ENCODE measurements at regions of chr16 and their contacts with region 1.

Region 1: DNA sequence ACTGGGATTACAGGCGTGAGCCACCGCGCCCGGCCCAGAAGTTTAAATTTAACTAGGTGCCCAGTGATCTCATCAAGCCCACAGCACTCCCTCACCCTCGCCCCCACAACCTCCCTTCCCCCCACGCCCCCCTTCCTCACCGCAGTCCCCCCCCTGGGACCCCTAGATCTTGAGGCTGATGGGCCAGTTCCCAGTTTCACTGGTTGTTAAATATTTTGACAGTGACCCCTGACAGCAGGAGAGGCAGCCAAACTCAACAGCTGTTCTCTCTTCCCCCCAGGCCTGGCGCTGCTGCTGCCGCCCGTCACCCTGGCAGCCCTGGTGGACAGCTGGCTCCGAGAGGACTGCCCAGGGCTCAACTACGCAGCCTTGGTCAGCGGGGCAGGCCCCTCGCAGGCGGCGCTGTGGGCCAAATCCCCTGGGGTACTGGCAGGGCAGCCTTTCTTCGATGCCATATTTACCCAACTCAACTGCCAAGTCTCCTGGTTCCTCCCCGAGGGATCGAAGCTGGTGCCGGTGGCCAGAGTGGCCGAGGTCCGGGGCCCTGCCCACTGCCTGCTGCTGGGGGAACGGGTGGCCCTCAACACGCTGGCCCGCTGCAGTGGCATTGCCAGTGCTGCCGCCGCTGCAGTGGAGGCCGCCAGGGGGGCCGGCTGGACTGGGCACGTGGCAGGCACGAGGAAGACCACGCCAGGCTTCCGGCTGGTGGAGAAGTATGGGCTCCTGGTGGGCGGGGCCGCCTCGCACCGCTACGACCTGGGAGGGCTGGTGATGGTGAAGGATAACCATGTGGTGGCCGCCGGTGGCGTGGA is 15.6 kb downstream of the QPRT start:
- DNase-seq: no peak
- ATAC-seq: peak; percentile 17
- H3K4me3 ChIP-seq: no peak overlapping the region
- H3K27ac ChIP-seq: no peak overlapping the region
- H3K4me1 ChIP-seq: no peaks in the 10 kb centered on the region
- H3K27me3 ChIP-seq: peaks cover 8% of the 10 kb centered on the region; the same call in 1 of the 2 replicates
- CTCF ChIP-seq: no peak
- POLR2A ChIP-seq: no peak
- RAD21 ChIP-seq: no peak

Region 2: DNA sequence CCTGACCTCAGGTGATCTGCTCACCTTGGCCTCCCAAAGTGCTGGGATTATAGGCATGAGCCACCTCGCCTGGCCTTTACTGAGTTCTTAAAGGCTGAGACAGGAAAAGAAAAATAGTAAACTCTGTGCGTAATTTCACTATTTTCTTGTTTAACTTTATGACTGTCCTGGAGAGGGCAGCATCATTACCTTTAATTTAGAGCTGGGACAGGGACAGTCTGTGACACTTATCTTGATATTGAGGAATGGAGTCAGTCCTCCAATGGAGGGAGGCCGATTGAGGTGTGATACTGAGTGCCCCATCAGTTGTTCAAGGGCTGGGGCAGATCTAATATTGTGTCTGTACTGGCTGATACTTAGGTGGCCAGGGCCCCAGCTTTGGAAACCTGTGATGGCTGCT is 53.0 kb before region 1 on chr16:
- CTCF ChIA-PET with region 1: no interaction called
- POLR2A ChIA-PET with region 1: no interaction called
- dilution Hi-C with region 1: no loop called
- in situ Hi-C with region 1: loop called (anchors 10 kb)
- intact Hi-C with region 1: no loop called
- DNase-seq: no peak
- ATAC-seq: peak; percentile 27; the same call in 1 of the 2 replicates
- H3K4me3 ChIP-seq: no peak overlapping the region
- H3K27ac ChIP-seq: no peak overlapping the region
- H3K4me1 ChIP-seq: no peaks in the 10 kb centered on the region
- H3K27me3 ChIP-seq: no peaks in the 10 kb centered on the region
- CTCF ChIP-seq: no peak
- POLR2A ChIP-seq: no peak
- RAD21 ChIP-seq: no peak

Region 3: GRCh38 chr16:29765167-29766032 is 70.8 kb after region 1 on chr16:
- CTCF ChIA-PET with region 1: no interaction called
- POLR2A ChIA-PET with region 1: no interaction called
- dilution Hi-C with region 1: no loop called
- in situ Hi-C with region 1: no loop called
- intact Hi-C with region 1: no loop called
- DNase-seq: no peak
- ATAC-seq: no peak
- H3K4me3 ChIP-seq: no peak overlapping the region
- H3K27ac ChIP-seq: no peak overlapping the region
- H3K4me1 ChIP-seq: no peaks in the 10 kb centered on the region
- H3K27me3 ChIP-seq: peaks cover 7% of the 10 kb centered on the region
- CTCF ChIP-seq: no peak
- POLR2A ChIP-seq: no peak
- RAD21 ChIP-seq: no peak

Region 4: GRCh38 chr16:29852654-29853053 is 158.1 kb after region 1 on chr16:
- CTCF ChIA-PET with region 1: no interaction called
- POLR2A ChIA-PET with region 1: no interaction called
- dilution Hi-C with region 1: no loop called
- in situ Hi-C with region 1: no loop called
- intact Hi-C with region 1: no loop called
- DNase-seq: peak; percentile 72
- ATAC-seq: peak; percentile 5; the same call in 1 of the 2 replicates
- H3K4me3 ChIP-seq: no peak overlapping the region
- H3K27ac ChIP-seq: no peak overlapping the region
- H3K4me1 ChIP-seq: peaks cover 2% of the 10 kb centered on the region; the same call in 1 of the 2 replicates
- H3K27me3 ChIP-seq: no peaks in the 10 kb centered on the region
- CTCF ChIP-seq: no peak
- POLR2A ChIP-seq: no peak
- RAD21 ChIP-seq: no peak

Region 5: DNA sequence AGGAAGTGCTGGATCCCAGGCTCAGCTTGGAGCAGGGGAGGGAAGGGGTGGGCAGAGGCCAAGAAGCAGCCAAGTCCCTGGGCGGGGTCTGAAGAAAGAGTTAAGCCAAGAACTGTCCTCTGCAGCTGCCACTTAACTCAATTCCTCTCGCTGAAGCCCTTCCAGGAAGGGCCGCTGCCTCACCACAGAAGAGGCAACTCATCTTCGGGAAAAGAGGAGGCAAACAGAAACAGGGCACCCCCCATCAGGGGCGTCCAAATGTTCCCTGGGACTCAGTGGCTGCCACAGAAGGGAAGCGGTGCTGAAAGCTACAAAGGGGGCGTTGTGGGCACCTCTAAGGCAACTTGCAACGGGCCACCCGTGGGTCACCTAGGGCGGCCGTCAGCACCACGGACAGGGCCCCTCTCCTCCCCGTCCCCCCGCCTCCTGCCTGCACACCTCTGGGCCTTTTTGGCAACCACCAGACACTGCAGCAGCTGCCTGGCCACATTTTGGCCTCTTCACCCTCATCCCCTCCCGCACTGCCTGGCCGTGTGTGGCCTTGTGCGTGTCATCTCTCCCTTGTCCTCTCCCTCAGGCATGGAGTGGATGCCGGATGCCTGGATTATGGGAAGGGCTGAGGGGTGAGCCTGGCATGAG is 334.0 kb after region 1 on chr16:
- CTCF ChIA-PET with region 1: no interaction called
- POLR2A ChIA-PET with region 1: no interaction called
- dilution Hi-C with region 1: no loop called
- in situ Hi-C with region 1: loop called (anchors 10 kb)
- intact Hi-C with region 1: no loop called
- DNase-seq: no peak
- ATAC-seq: peak; percentile 60
- H3K4me3 ChIP-seq: no peak overlapping the region
- H3K27ac ChIP-seq: no peak overlapping the region
- H3K4me1 ChIP-seq: no peaks in the 10 kb centered on the region
- H3K27me3 ChIP-seq: peaks cover 70% of the 10 kb centered on the region
- CTCF ChIP-seq: no peak
- POLR2A ChIP-seq: no peak
- RAD21 ChIP-seq: no peak

Measured in IMR-90 (cell line).